Caco-2 (cell line): ENCODE measurements at regions of chr3 and their contacts with region 1.

Region 1: DNA sequence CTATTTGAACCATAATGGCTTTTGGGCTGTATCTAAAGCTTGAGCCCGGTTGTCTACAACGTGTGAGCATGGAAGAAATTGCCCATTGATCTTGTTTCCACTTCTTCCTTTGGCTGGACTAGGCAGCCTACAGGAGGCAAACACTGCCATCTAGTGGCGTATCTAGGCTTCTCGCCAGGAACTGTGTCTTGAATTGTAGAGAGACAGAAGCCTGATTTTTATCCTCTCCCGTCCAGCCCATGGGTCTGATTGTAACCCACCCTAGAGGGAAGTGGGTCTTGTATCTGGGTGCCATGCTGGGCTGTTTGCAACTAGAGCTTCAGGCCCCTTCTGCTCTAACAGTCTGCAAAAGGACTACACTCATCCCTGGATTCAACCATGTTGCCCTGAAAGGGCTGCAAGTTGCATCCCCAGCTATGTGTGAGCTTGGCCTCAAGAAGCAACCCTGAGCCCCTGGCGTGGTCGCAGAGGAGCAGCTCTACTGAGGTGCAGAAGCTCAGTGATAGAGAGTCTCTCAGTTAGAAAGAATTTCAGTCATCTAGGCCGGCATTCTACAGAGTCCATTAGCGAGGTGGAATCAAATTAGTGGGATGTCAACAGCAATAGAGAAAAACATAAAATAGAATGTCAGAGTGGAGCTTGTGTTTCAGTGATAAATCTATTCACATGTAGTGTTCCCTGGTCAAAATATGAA is 170.2 kb upstream of the UMPS start:
- DNase-seq: peak; percentile 72 to 77
- H3K4me3 ChIP-seq: no peak overlapping the region
- H3K4me3 Mint-ChIP-seq: no peak overlapping the region
- H3K27ac Mint-ChIP-seq: no peak overlapping the region
- H3K4me1 ChIP-seq: peaks cover 15% of the 10 kb centered on the region; the same call in 1 of the 2 replicates
- H3K4me1 Mint-ChIP-seq: peaks cover 18% of the 10 kb centered on the region
- H3K27me3 ChIP-seq: no peaks in the 10 kb centered on the region
- H3K27me3 Mint-ChIP-seq: peaks cover 5% of the 10 kb centered on the region
- CTCF ChIP-seq: peak; percentile 79 to 89

Region 2: DNA sequence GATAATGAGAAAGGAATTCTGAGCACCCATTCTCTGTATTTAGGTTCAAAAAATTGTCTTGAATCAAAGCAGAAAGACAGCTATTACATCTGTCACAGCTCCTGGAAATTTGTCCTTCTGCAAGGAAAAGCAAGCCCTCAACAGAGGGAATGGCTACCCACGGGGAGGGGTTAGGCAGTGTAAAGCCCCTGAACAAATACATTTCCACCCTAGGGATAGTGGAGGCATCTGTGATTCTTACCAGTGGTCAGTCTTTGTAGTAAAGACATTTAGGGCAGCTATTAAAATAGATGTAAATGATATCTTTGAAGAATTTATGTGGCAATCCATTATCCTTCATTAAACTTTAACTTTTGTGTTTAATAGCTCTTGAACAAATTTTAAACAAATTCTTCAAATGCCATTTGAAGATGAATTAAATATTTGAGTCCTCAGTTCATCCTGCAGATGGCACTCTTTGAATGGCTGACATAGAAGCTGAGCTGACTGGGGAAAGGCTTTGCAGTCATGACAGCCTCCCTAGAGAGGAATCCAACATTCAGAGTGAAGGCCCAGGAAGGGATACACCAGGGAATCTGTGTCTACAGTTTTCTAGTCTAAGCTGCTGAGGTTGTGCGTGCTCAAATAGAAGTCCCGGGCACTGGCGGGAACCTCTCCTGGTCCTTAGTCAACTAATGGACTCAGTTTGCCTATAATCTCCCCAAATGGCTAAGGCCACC is 208.4 kb before region 1 on chr3:
- CTCF ChIA-PET with region 1: interaction called, 7 read pairs
- POLR2A ChIA-PET with region 1: no interaction called
- intact Hi-C with region 1: loop called (anchors 1 kb)
- DNase-seq: peak; percentile 74 to 77
- H3K4me3 ChIP-seq: no peak overlapping the region
- H3K4me3 Mint-ChIP-seq: no peak overlapping the region
- H3K27ac Mint-ChIP-seq: peak overlapping the region; percentile 50
- H3K4me1 ChIP-seq: peaks cover 18% of the 10 kb centered on the region
- H3K4me1 Mint-ChIP-seq: peaks cover 24% of the 10 kb centered on the region
- H3K27me3 ChIP-seq: no peaks in the 10 kb centered on the region
- H3K27me3 Mint-ChIP-seq: no peaks in the 10 kb centered on the region
- CTCF ChIP-seq: peak; percentile 52 to 59

Region 3: DNA sequence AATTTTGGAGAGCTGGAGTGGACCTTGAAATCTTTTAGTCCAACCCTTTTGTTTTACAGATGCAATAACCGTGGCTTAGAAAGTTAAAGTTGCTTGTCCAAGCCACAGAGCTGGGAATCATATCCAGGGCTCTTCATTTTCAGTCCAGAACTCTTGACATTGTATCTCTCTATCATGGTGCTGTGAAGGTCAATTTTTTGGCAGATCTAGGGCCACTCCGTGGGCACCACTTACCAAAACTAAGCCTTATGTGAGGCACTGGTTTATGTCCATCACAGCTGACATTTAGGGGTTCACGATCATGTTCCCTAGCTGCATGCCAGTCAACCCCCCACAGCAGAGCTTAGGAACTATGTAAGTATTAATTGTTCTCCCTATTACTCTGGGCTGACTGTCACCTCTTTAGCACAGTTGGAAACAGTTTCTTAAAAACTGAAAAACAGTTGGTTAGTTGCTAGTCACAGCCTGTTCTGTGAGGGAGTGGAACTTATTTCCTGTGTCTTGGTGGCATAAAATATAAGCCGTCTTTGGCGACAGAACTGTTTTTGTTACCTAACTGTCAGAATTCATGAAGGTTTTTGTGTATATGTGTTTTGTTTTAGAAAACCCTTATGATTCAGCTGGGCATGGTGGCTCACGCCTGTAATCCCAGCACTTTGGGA is 19.3 kb before region 1 on chr3:
- CTCF ChIA-PET with region 1: no interaction called
- POLR2A ChIA-PET with region 1: no interaction called
- intact Hi-C with region 1: no loop called
- DNase-seq: no peak
- H3K4me3 ChIP-seq: no peak overlapping the region
- H3K4me3 Mint-ChIP-seq: no peak overlapping the region
- H3K27ac Mint-ChIP-seq: no peak overlapping the region
- H3K4me1 ChIP-seq: no peaks in the 10 kb centered on the region
- H3K4me1 Mint-ChIP-seq: no peaks in the 10 kb centered on the region
- H3K27me3 ChIP-seq: no peaks in the 10 kb centered on the region
- H3K27me3 Mint-ChIP-seq: peaks cover 4% of the 10 kb centered on the region
- CTCF ChIP-seq: no peak

Region 4: GRCh38 chr3:124584552-124585391 is 24.7 kb after region 1 on chr3:
- CTCF ChIA-PET with region 1: no interaction called
- POLR2A ChIA-PET with region 1: no interaction called
- intact Hi-C with region 1: loop called (anchors 2 kb)
- DNase-seq: peak; percentile 87 to 89
- H3K4me3 ChIP-seq: peak overlapping the region; percentile 47
- H3K4me3 Mint-ChIP-seq: peak overlapping the region; percentile 84
- H3K27ac Mint-ChIP-seq: peak overlapping the region; percentile 73
- H3K4me1 ChIP-seq: peaks cover 37% of the 10 kb centered on the region
- H3K4me1 Mint-ChIP-seq: peaks cover 21% of the 10 kb centered on the region
- H3K27me3 ChIP-seq: no peaks in the 10 kb centered on the region
- H3K27me3 Mint-ChIP-seq: no peaks in the 10 kb centered on the region
- CTCF ChIP-seq: no peak

Region 5: DNA sequence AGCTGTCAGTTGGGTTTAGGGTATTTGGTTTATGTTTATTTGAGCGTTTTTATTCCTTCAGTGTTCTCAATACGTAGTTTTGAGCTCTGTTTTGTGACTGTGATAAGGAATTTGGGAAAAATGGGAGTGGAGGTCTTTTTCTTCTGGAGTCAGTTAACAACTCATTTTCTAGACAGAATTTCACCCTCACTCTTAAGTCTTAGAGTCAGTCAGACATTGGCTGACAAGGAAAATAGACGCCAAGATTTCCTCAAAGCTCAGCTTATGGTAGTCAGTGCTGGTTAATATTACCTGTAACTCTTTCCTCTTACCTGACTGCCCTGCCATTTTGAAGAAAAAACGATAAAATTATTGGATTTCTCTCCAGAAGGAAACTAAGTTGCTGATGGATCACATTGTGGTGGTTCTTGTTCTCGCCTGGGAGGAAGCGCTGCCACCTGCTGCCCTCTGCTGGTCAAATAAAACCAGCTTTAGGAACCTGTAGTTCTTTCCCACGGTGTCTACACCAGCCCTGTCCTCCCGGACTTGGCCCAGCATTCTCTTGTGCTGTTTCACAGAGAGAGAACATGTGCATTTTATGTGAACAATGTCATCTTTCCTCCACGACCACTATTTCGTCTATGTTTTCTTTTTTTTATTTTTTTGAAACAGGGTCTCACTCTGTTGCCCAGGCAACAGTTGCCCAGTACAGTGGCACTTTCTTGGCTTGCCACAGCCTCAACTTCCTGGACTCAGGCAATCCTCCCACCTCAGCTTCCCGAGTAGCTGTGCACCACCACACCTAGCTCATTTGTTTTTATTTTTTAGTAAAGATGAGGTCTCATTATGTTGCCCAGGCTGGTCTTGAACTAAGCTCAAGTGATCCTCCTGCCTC is 128.8 kb after region 1 on chr3:
- CTCF ChIA-PET with region 1: interaction called, 28 read pairs
- POLR2A ChIA-PET with region 1: no interaction called
- intact Hi-C with region 1: loop called (anchors 1 kb)
- DNase-seq: peak; percentile 83 to 84
- H3K4me3 ChIP-seq: no peak overlapping the region
- H3K4me3 Mint-ChIP-seq: peak overlapping the region; percentile 48
- H3K27ac Mint-ChIP-seq: peak overlapping the region; percentile 71
- H3K4me1 ChIP-seq: peaks cover 44% of the 10 kb centered on the region
- H3K4me1 Mint-ChIP-seq: peaks cover 53% of the 10 kb centered on the region
- H3K27me3 ChIP-seq: no peaks in the 10 kb centered on the region
- H3K27me3 Mint-ChIP-seq: no peaks in the 10 kb centered on the region
- CTCF ChIP-seq: peak; percentile 79 to 80

Region 6: GRCh38 chr3:124761250-124761796 is 201.3 kb after region 1 on chr3:
- CTCF ChIA-PET with region 1: interaction called, 3 read pairs
- POLR2A ChIA-PET with region 1: no interaction called
- intact Hi-C with region 1: loop called (anchors 5 kb)
- DNase-seq: peak; percentile 75 to 80
- H3K4me3 ChIP-seq: no peak overlapping the region
- H3K4me3 Mint-ChIP-seq: peak overlapping the region; percentile 38
- H3K27ac Mint-ChIP-seq: peak overlapping the region; percentile 44
- H3K4me1 ChIP-seq: peaks cover 9% of the 10 kb centered on the region
- H3K4me1 Mint-ChIP-seq: peaks cover 21% of the 10 kb centered on the region
- H3K27me3 ChIP-seq: no peaks in the 10 kb centered on the region
- H3K27me3 Mint-ChIP-seq: no peaks in the 10 kb centered on the region
- CTCF ChIP-seq: peak; percentile 92 to 94